Ascending aorta (tissue), 2 donors: ENCODE measurements at regions of chrX and their contacts with region 1.

Region 1: GRCh38 chrX:103817502-103817901 is 14.6 kb downstream of the RAB9B start:
- DNase-seq: no peak
- H3K4me3 ChIP-seq: no peak overlapping the region
- H3K27ac ChIP-seq: no peak overlapping the region
- H3K4me1 ChIP-seq: no peaks in the 10 kb centered on the region
- H3K27me3 ChIP-seq: no peaks in the 10 kb centered on the region
- CTCF ChIP-seq: peak; percentile 15 to 82 (median 73)

Region 2: DNA sequence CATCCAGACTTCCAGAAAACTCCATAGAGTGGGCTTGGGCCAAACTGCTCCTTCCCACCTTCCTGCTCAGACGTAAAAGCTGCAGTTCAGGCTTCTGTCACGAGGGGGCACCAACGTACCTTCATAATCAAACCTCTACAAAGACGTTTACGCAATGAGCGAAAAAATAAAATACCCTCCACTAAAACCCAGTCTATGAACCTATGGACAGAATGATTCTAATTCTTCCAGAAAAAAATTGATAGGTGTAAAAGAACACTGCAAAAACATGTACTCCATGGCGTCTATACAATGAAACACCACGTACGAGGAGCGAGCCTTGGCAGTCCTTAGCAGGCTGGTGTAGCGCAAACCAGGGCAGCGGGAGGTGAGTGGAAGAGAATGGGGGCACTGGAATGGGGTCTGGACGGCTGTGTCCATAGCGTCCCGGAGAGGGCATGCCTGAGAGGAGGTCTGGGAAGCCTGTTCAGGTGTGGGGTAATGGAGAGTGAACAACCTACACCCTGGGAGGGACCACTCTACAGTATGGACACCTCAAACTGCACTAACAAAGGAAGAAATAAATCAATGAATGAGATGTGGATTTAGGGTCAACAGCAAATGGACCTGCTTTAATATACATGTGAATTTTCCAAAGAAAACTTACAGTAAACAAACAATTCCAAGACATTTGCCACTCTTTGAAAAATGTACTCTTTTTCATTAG is 283.8 kb before region 1 on chrX:
- intact Hi-C with region 1: loop called (anchors 1 kb)
- DNase-seq: peak; percentile 16 to 90
- H3K4me3 ChIP-seq: peak overlapping the region; percentile 45 to 56
- H3K27ac ChIP-seq: peak overlapping the region; percentile 52 to 63
- H3K4me1 ChIP-seq: peaks cover 0 to 10% of the 10 kb centered on the region in 2 donors
- H3K27me3 ChIP-seq: no peaks in the 10 kb centered on the region
- CTCF ChIP-seq: peak; percentile 60 to 88 (median 81)